ENCODE measurements at regions of chr20 and their contacts with region 1.

Region 1: GRCh38 chr20:3135507-3136070 is 24.1 kb downstream of the FASTKD5 start:
- DNase-seq: no peak
- ATAC-seq: no peak
- H3K4me3 ChIP-seq: no peak overlapping the region
- H3K4me3 Mint-ChIP-seq: no peak overlapping the region
- H3K27ac ChIP-seq: no peak overlapping the region
- H3K27ac Mint-ChIP-seq: peak overlapping the region in 1 of 2 donors; percentile 50
- H3K4me1 ChIP-seq: no peaks in the 10 kb centered on the region
- H3K4me1 Mint-ChIP-seq: peaks cover 15 to 23% (median 23%) of the 10 kb centered on the region in 3 donors
- H3K27me3 ChIP-seq: no peaks in the 10 kb centered on the region
- H3K27me3 Mint-ChIP-seq: no peaks in the 10 kb centered on the region

Region 2: GRCh38 chr20:2470423-2471193 is 665.0 kb before region 1 on chr20 and contains the start of gene SNRPB:
- CTCF ChIA-PET with region 1: no interaction called
- POLR2A ChIA-PET with region 1: no interaction called
- DNase-seq: peak; percentile 92 to 99 (median 96)
- ATAC-seq: peak; percentile 91 to 94 (median 92)
- H3K4me3 ChIP-seq: peak within 1 kb of the TSS; percentile 94 to 99
- H3K4me3 Mint-ChIP-seq: peak within 1 kb of the TSS; percentile 95 to 100 (median 97)
- H3K27ac ChIP-seq: peak within 1 kb of the TSS; percentile 98
- H3K27ac Mint-ChIP-seq: peak within 1 kb of the TSS; percentile 98 to 99
- H3K4me1 ChIP-seq: peaks cover 8 to 20% of the 10 kb centered on the region in 2 experiments
- H3K4me1 Mint-ChIP-seq: peaks cover 44 to 46% (median 45%) of the 10 kb centered on the region in 3 donors
- H3K27me3 ChIP-seq: no peaks in the 10 kb centered on the region
- H3K27me3 Mint-ChIP-seq: no peaks in the 10 kb centered on the region
- total RNA-seq, gene SNRPB: 120 to 139 (median 128) TPM

Region 3: GRCh38 chr20:3021327-3021726 is 114.3 kb before region 1 on chr20:
- CTCF ChIA-PET with region 1: no interaction called
- POLR2A ChIA-PET with region 1: no interaction called
- DNase-seq: no peak
- ATAC-seq: no peak
- H3K4me3 ChIP-seq: no peak overlapping the region
- H3K4me3 Mint-ChIP-seq: no peak overlapping the region
- H3K27ac ChIP-seq: no peak overlapping the region
- H3K27ac Mint-ChIP-seq: no peak overlapping the region
- H3K4me1 ChIP-seq: no peaks in the 10 kb centered on the region
- H3K4me1 Mint-ChIP-seq: no peaks in the 10 kb centered on the region
- H3K27me3 ChIP-seq: no peaks in the 10 kb centered on the region
- H3K27me3 Mint-ChIP-seq: no peaks in the 10 kb centered on the region

Region 4: DNA sequence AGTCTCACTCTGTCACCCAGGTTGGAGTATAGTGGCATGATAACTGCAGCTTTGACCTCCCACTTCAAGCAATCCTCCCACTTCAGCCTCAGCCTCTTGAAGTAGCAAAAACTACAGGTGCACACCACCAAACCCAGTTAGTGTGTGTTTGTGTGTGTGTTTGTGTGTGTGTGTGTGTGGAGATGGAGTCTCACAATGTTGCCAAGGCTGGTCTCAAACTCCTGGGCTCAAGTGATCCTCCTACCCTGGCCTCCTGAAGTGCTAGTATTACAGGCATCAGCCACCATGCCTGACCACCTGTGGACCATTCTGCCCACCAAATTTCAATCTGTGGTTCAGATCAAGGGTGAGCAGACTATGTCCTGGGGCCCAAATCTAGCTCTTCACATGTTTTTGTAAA is 15.3 kb after region 1 on chr20:
- CTCF ChIA-PET with region 1: interaction called in 1 of 2 experiments, 6 read pairs
- POLR2A ChIA-PET with region 1: interaction called in 1 of 2 experiments, 10 read pairs
- DNase-seq: no peak
- ATAC-seq: no peak
- H3K4me3 ChIP-seq: no peak overlapping the region
- H3K4me3 Mint-ChIP-seq: peak overlapping the region in 1 of 3 donors; percentile 24
- H3K27ac ChIP-seq: no peak overlapping the region
- H3K27ac Mint-ChIP-seq: peak overlapping the region; percentile 67 to 71
- H3K4me1 ChIP-seq: peaks cover 0 to 19% of the 10 kb centered on the region in 2 experiments
- H3K4me1 Mint-ChIP-seq: peaks cover 66 to 80% (median 74%) of the 10 kb centered on the region in 3 donors
- H3K27me3 ChIP-seq: no peaks in the 10 kb centered on the region
- H3K27me3 Mint-ChIP-seq: no peaks in the 10 kb centered on the region